IMR-90 (cell line): ENCODE measurements at regions of chr3 and their contacts with region 1.

Region 1: DNA sequence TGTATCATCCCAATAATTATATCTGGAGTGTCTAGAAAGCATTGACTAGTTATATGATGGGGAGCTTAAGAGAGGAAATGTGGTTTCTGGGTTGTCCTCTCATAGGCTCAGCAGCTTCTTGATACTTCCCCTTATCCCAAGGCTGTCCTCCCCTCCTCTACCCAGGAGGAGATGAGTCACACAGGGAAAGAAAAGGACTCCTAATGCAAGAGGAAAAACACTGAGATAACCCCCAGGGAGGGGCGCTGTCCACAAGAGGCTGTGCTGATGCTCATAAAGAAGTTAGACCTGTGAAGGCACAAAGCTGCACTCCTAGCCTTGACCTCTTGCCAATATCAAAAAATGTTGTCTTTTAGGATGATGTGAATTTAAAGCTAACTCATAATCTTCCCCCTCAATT is 28.8 kb upstream of the GYG1 start:
- DNase-seq: peak; percentile 88
- ATAC-seq: peak; percentile 99
- H3K4me3 ChIP-seq: no peak overlapping the region
- H3K27ac ChIP-seq: no peak overlapping the region
- H3K4me1 ChIP-seq: no peaks in the 10 kb centered on the region
- H3K27me3 ChIP-seq: no peaks in the 10 kb centered on the region
- CTCF ChIP-seq: peak; percentile 54
- POLR2A ChIP-seq: no peak
- RAD21 ChIP-seq: peak; percentile 63

Region 2: DNA sequence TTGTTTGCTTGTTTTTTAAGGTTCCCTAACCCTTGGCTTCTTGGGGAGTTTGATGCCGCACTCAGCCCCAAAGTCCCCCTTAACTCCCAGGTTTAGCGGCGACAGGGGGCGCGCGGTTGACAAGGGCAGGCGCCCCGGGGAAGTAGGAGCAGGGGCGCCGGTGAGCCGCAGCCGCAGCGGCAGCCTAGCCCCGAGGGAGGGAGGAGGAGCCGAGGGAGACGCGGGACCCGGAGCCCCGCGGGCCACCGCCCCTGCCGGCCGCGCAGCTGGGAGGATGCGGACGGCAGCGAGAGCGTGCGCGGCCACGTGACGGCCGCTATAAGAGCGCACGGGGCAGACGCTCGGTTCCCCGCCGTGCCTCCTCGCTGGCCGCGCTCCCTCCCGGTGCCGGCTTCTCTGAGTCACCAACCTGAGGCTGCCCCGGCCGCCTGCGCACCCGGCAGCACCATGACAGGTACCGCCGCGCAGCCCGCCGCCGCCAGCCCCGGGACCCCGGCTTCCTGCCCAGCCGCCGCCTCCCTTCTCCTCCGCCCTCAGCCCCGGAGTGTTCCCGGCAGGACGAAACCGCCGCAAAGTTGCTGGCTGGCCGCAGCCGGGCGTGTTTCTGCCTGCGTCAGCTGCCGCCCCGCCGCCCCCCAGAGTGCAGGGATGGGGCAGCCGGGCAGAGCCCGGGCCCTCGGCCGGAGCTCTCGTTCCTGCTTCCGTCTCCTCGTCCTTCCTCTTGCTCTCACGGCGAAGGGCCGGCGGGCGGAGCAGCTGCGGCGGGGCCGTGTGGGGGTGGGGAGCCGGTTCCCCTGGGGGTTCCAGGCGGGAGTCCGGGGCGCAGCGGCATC is 28.9 kb after region 1 on chr3 and contains the start of gene GYG1:
- CTCF ChIA-PET with region 1: no interaction called
- POLR2A ChIA-PET with region 1: no interaction called
- dilution Hi-C with region 1: no loop called
- in situ Hi-C with region 1: no loop called
- intact Hi-C with region 1: loop called (anchors 1 kb)
- DNase-seq: peak; percentile 80
- ATAC-seq: peak; percentile 91
- H3K4me3 ChIP-seq: peak within 1 kb of the TSS; percentile 63
- H3K27ac ChIP-seq: peak within 1 kb of the TSS; percentile 83
- H3K4me1 ChIP-seq: peaks cover 15% of the 10 kb centered on the region
- H3K27me3 ChIP-seq: no peaks in the 10 kb centered on the region
- CTCF ChIP-seq: peak; percentile 28; the same call in 1 of the 2 replicates
- POLR2A ChIP-seq: peak; percentile 89
- RAD21 ChIP-seq: peak; percentile 18; the same call in 1 of the 2 replicates
- total RNA-seq, gene GYG1: 77.8 and 90.3 TPM in 2 replicates